SK-N-SH (cell line): ENCODE measurements at regions of chr12 and their contacts with region 1.

Region 1: GRCh38 chr12:50132505-50133135 is 20.6 kb downstream of the COX14 start:
- DNase-seq: peak; percentile 38
- H3K4me3 ChIP-seq: no peak overlapping the region; a peak in 1 of 4 replicates
- H3K27ac ChIP-seq: 0 out of 4 replicates have a peak overlapping the region, but pooled peaks of 1 of the 2 experiments have one; percentile 19
- H3K4me1 ChIP-seq: peaks cover 3 to 10% of the 10 kb centered on the region in 2 experiments; a peak in 3 of 4 replicates
- H3K27me3 ChIP-seq: no peaks in the 10 kb centered on the region
- CTCF ChIP-seq: peak; percentile 80
- EP300 ChIP-seq: no peak
- RAD21 ChIP-seq: peak; percentile 70

Region 2: DNA sequence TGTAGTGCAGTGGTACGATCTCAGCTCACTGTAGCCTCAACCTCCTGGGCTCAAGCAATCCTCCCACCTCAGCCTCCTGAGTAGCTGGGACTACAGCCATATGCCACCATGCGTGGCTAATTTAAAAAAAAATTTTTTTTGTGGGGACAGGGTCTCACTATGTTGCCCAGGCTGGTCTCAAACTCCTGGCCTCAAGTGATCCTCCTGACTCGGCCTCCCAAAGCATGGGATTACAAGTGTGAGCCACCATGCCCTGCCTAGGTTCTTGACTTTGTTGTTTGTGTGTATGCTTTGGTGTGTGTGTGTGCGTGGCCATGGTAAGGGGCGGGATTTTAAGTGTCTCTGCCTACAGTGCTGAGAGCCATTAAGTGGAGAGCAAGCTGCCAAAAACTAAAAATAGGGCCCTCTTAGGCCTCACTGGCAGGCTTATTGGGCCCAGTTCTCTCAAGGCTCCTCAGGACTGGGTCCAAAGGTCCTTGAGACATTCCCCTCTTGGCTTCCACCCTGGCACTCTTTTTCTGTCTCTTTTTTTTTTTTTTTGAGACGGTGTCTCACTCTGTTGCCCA is 15.5 kb before region 1 on chr12:
- CTCF ChIA-PET with region 1: interaction called, 84 read pairs
- POLR2A ChIA-PET with region 1: interaction called, 5 read pairs
- DNase-seq: no peak
- H3K4me3 ChIP-seq: no peak overlapping the region
- H3K27ac ChIP-seq: no peak overlapping the region
- H3K4me1 ChIP-seq: peaks cover 0 to 2% of the 10 kb centered on the region in 2 experiments; a peak in 1 of 4 replicates
- H3K27me3 ChIP-seq: no peaks in the 10 kb centered on the region
- CTCF ChIP-seq: no peak
- EP300 ChIP-seq: no peak
- RAD21 ChIP-seq: no peak

Region 3: DNA sequence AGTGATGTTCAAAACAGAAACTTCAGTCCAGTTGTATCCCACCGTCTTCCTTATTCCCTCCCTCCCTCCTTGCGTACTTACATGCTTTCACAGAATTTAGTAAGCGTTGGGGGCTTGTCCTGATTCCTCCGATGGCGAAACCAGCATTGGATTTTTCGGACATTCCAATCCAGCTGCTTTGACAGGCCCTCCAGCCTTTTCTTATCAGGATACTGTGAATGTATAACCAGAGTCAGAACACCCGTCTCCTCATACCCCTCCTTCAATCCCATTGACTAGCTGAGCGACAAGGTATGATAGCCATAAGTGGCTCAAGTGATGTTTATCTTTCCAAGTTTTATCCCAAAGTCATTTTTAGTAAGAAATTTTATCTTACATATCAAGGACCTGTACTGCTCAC is 10.4 kb after region 1 on chr12:
- CTCF ChIA-PET with region 1: interaction called, 38 read pairs
- POLR2A ChIA-PET with region 1: interaction called, 3 read pairs
- DNase-seq: no peak
- H3K4me3 ChIP-seq: no peak overlapping the region
- H3K27ac ChIP-seq: no peak overlapping the region
- H3K4me1 ChIP-seq: no peaks in the 10 kb centered on the region
- H3K27me3 ChIP-seq: no peaks in the 10 kb centered on the region
- CTCF ChIP-seq: no peak
- EP300 ChIP-seq: no peak
- RAD21 ChIP-seq: no peak

Region 4: GRCh38 chr12:50151047-50151687 is 18.5 kb after region 1 on chr12:
- CTCF ChIA-PET with region 1: interaction called, 38 read pairs
- POLR2A ChIA-PET with region 1: no interaction called
- DNase-seq: no peak
- H3K4me3 ChIP-seq: no peak overlapping the region
- H3K27ac ChIP-seq: no peak overlapping the region
- H3K4me1 ChIP-seq: no peaks in the 10 kb centered on the region
- H3K27me3 ChIP-seq: no peaks in the 10 kb centered on the region
- CTCF ChIP-seq: no peak
- EP300 ChIP-seq: no peak
- RAD21 ChIP-seq: no peak

Region 5: DNA sequence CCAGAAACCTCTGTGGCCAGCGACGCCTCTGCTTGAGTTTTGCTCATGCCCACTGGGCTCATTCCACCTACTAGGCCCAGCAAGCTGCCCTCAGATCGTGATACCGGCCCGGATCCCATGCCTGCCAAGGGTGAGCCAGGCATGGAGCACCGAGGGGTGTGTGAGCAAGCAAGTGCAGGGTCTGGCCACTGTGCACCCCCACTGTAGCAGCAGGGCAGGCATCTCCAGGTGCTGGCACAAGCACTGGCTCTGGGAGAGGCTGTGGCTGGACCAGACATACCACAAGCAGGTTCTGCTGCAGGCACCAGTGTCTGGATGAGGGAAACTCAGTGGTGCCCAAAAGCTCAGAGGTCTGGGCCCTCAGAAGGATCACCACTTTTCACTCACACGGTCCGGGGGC is 243.2 kb after region 1 on chr12:
- CTCF ChIA-PET with region 1: no interaction called
- POLR2A ChIA-PET with region 1: no interaction called
- DNase-seq: no peak
- H3K4me3 ChIP-seq: no peak overlapping the region
- H3K27ac ChIP-seq: no peak overlapping the region
- H3K4me1 ChIP-seq: no peaks in the 10 kb centered on the region
- H3K27me3 ChIP-seq: no peaks in the 10 kb centered on the region
- CTCF ChIP-seq: no peak
- EP300 ChIP-seq: no peak
- RAD21 ChIP-seq: no peak